Mammary epithelial cell (primary cell): ENCODE measurements at regions of chr9 and their contacts with region 1.

Region 1: GRCh38 chr9:89993678-89994630 is 389.1 kb downstream of the GADD45G start:
- DNase-seq: no peak
- H3K4me3 ChIP-seq: no peak overlapping the region
- H3K27ac ChIP-seq: no peak overlapping the region
- H3K4me1 ChIP-seq: no peaks in the 10 kb centered on the region
- H3K27me3 ChIP-seq: no peaks in the 10 kb centered on the region
- CTCF ChIP-seq: no peak

Region 2: DNA sequence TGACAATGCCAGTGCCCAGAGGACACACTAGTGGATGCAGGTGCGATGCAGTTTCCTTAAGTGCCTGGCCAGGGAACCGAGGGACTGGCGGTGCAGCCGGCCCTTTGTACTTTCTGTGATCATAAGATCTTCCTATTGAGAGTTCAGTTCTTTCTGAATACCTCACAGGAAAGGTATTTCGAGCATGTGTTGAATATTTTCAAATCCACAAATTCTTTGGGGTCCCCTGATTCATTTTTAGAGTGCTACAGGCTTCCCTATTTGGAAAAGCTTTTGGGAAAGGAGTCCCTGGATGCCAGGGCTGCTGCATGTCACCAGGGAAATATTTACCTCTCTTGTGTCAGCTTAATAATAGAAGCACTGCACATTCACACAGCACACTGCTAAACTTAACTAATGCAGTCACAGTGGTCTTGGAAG is 107.7 kb before region 1 on chr9:
- CTCF ChIA-PET with region 1: no interaction called
- dilution Hi-C with region 1: loop called (anchors 5 kb)
- in situ Hi-C with region 1: no loop called
- intact Hi-C with region 1: no loop called
- DNase-seq: no peak
- H3K4me3 ChIP-seq: no peak overlapping the region
- H3K27ac ChIP-seq: no peak overlapping the region
- H3K4me1 ChIP-seq: no peaks in the 10 kb centered on the region
- H3K27me3 ChIP-seq: no peaks in the 10 kb centered on the region
- CTCF ChIP-seq: no peak

Region 3: DNA sequence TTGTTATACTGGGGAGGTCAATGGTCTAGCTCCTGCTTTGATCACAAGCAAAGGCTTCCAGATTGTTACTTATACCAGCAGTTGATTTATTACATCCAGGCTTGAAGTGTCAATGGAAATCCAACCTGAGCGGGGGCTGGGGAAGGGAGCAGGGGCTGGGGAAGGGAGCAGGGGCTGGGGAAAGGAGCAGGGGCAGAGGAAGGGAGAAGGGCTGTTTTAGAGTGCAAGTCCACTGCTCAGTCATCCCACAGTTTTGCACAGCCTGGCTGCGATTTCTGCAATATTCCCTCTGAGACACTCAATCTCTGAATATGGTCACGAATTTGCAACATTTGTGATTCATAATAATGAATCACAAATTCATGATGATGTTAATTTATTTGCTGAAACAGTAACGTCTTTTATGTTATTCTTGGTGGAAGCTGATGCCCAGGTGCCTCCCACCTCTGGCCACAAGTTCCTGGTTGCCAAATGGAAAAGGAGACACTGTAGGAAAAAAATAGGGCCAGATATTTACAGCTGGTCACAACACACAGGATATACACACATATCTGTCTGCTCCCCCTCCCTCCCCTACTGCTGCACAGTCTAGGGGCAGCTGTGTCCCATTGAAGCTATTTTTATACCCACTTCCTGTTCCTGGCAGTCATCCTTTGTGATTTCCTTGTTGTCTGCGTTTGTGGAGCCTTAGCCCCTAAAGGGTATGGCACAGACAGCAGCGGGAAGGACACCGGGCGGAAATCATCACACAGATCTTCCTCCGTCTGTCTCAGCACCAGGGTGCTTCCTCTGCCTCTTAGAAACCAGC is 64.1 kb before region 1 on chr9:
- CTCF ChIA-PET with region 1: no interaction called
- dilution Hi-C with region 1: loop called (anchors 5 kb)
- in situ Hi-C with region 1: no loop called
- intact Hi-C with region 1: no loop called
- DNase-seq: peak; percentile 64
- H3K4me3 ChIP-seq: no peak overlapping the region
- H3K27ac ChIP-seq: no peak overlapping the region
- H3K4me1 ChIP-seq: no peaks in the 10 kb centered on the region
- H3K27me3 ChIP-seq: no peaks in the 10 kb centered on the region
- CTCF ChIP-seq: no peak

Region 4: DNA sequence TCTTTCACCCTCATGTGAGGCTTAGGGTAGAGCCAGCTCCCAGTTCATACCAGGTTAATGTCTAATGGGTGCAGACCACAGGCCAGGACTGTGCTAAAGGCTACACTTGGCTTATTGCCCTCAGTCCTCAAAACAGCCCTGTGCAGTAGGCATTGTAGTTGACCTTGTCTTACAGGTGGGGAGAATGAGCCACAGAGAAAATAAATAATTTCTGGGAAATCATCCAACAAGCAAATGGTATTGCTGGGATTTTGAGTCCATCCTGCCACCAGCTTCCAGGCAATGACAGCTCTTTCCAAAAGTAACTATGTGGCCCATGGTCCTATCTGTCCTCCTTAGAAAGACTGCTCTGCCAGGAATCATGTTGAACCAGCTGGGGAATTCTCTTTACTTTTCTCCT is 60.9 kb after region 1 on chr9:
- CTCF ChIA-PET with region 1: no interaction called
- dilution Hi-C with region 1: loop called (anchors 5 kb)
- in situ Hi-C with region 1: no loop called
- intact Hi-C with region 1: no loop called
- DNase-seq: no peak
- H3K4me3 ChIP-seq: no peak overlapping the region
- H3K27ac ChIP-seq: no peak overlapping the region
- H3K4me1 ChIP-seq: no peaks in the 10 kb centered on the region
- H3K27me3 ChIP-seq: peaks cover 4% of the 10 kb centered on the region
- CTCF ChIP-seq: no peak

Region 5: GRCh38 chr9:90147426-90147825 is 153.5 kb after region 1 on chr9:
- CTCF ChIA-PET with region 1: no interaction called
- dilution Hi-C with region 1: no loop called
- in situ Hi-C with region 1: no loop called
- intact Hi-C with region 1: no loop called
- DNase-seq: no peak
- H3K4me3 ChIP-seq: no peak overlapping the region
- H3K27ac ChIP-seq: no peak overlapping the region
- H3K4me1 ChIP-seq: no peaks in the 10 kb centered on the region
- H3K27me3 ChIP-seq: peaks cover 2% of the 10 kb centered on the region
- CTCF ChIP-seq: no peak